Esophagus muscularis mucosa (tissue), 4 donors: ENCODE measurements at regions of chr3 and their contacts with region 1.

Region 1: DNA sequence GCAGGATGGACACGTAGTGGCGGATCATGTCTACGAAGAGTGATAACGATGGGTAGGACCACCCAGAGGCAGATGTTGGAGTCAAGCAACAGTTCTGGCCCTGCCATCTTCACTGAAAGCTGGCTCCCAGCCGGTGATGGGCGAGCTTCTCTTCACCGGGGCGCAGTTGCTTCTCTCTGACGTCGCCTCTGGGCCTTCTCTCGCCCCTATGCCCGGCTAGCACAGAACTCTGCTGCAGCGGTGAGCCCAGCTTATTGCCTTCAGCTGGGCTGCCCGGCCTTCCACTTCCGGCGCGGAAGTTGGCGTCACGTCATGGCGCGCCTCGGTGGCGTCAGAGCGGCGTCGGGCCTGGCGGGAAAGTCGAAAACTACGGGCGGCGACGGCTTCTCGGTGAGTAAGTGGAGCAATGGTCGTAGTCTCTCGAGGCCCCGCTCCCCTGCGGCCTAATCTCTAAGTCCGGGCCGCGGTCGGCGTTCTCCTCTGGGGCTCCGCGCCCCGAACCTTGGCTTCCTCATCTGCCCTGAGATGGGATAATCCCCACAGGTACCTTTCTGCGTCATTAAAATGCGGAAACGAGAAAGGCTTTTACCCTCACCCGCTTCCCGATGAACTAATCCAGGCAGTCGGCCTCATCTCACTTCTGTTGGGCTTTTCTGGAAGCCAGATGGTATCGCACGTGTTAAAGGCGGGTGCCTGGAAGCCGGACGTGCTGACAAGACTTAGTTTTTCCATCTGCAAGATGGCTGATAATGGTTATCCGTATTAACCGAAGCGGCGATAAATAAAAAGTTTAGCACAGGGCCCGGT is at the start of gene FANCD2:
- DNase-seq: peak; percentile 97
- H3K4me3 ChIP-seq: peak within 1 kb of the TSS; percentile 81 to 86 (median 83)
- H3K27ac ChIP-seq: peak within 1 kb of the TSS; percentile 65 to 89 (median 80)
- H3K4me1 ChIP-seq: peaks cover 21 to 37% (median 30%) of the 10 kb centered on the region in 4 donors
- H3K27me3 ChIP-seq: no peaks in the 10 kb centered on the region
- CTCF ChIP-seq: no peak
- EP300 ChIP-seq: no peak
- POLR2A ChIP-seq: peak; percentile 55
- total RNA-seq, gene FANCD2: 0.52 to 2.3 (median 1.1) TPM

Region 2: GRCh38 chr3:9932843-9933560 is 93.3 kb before region 1 on chr3:
- intact Hi-C with region 1: loop called (anchors 5 kb)
- DNase-seq: peak; percentile 95
- H3K4me3 ChIP-seq: peak overlapping the region; percentile 70 to 89 (median 79)
- H3K27ac ChIP-seq: peak overlapping the region; percentile 93 to 99 (median 96)
- H3K4me1 ChIP-seq: peaks cover 22 to 52% (median 38%) of the 10 kb centered on the region in 4 donors
- H3K27me3 ChIP-seq: peaks cover 0 to 8% (median 0%) of the 10 kb centered on the region in 4 donors
- CTCF ChIP-seq: peak; percentile 74 to 84 (median 80)
- EP300 ChIP-seq: no peak
- POLR2A ChIP-seq: no peak

Region 3: DNA sequence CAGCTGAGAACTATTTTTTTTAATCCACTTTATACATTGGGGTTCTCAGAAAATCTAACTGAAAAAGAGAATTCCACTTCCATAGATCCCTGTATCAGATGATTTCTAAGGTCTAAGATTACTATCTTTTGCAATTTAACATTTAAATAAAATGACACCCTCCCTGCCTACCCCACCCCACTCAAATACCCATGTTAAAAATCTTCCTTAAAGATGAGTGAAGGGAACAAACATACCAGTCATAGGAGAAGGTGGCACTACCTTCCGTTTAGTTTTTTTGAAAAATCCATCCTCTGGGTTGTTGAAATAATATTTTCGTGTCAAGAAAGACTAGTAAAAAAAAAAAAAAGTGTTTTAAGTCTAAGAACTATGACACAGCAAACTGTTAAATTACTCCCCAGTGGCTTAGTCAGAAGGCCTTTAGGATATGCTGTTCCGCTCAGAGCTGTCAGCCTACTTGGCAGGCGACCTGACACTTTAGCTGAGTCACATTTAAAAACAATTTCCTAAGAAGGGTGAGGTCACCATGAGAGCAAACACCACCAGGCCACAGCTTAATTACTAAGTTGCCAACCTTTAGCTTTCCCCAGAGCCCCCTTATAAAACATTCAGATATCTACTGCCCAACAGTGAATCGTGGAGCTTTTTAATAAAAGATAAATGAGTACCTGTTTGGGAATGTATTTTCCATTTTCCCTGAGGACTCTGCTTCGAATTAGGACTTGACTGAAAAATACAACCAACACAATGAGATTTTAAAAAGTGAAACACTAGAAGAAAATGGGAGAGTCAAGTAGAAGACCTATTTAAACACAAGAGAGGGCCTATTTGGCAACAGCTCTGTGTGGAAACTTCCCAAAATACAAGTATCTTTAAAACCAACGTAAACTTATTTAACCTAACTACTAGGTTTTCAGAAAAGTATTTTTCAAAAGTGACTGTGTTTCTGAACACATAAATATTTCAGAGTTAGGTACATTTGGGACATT is 49.3 kb before region 1 on chr3:
- intact Hi-C with region 1: loop called (anchors 5 kb)
- DNase-seq: peak; percentile 95
- H3K4me3 ChIP-seq: peak overlapping the region in 2 of 4 donors; percentile 1 to 20
- H3K27ac ChIP-seq: peak overlapping the region; percentile 83 to 85 (median 84)
- H3K4me1 ChIP-seq: peaks cover 16 to 44% (median 44%) of the 10 kb centered on the region in 4 donors
- H3K27me3 ChIP-seq: no peaks in the 10 kb centered on the region
- CTCF ChIP-seq: no peak
- EP300 ChIP-seq: no peak
- POLR2A ChIP-seq: no peak

Region 4: GRCh38 chr3:10115326-10116137 is 89.2 kb after region 1 on chr3 and contains the start of gene BRK1:
- intact Hi-C with region 1: loop called (anchors 5 kb)
- DNase-seq: peak; percentile 98
- H3K4me3 ChIP-seq: peak within 1 kb of the TSS; percentile 84 to 89 (median 88)
- H3K27ac ChIP-seq: peak within 1 kb of the TSS; percentile 83 to 89 (median 86)
- H3K4me1 ChIP-seq: peaks cover 25 to 50% (median 39%) of the 10 kb centered on the region in 4 donors
- H3K27me3 ChIP-seq: no peaks in the 10 kb centered on the region
- CTCF ChIP-seq: peak in 1 of 3 experiments; percentile 17
- EP300 ChIP-seq: no peak
- POLR2A ChIP-seq: peak; percentile 50
- total RNA-seq, gene BRK1: 107 to 148 (median 142) TPM

Region 5: DNA sequence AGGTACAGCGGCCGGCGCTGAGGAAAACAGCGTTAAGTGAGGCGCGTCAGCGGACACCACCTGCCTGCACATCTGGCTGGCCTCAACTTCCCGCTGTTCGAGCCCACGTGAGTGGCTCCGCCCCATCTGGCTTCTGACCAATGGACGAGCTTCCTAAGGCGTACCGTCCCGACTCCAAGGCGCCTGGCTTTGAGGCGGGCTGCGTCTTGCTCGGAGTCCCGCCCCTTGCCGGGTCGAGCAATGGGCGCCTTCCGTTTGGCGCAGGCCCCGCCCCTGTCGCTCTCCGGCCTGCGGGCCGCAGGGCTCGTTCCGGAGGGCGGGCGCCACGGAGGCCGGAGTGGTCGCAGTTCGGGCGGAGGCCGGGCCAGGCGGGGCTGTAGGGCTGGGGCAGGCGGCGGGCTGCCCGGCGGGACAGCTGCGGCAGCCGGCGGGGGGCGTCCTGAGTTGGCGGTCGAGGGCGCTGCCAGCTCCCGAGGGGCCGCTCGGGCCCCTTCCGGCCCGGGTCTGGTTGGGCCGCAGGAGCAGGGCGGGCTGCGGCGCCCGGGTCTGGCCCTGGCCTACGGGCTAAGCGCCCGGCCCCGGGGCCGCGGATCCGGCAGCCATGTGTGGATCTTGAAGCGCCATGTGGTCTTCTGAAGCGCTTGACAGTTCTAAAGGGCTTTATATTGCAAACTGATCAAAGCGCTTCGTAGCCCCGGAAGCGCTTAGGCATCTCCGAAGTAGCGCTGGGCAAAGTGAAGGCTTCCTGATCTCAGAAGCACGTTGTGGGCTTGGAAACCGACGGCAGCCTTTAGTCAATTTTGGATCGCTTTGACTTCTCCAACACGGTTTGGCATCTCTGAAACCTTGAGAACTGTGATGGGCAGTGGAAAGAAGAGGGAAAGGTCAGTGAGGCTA is 222.1 kb after region 1 on chr3 and contains the start of gene TATDN2:
- intact Hi-C with region 1: loop called (anchors 5 kb)
- DNase-seq: peak; percentile 98
- H3K4me3 ChIP-seq: peak within 1 kb of the TSS; percentile 79 to 100 (median 92)
- H3K27ac ChIP-seq: peak within 1 kb of the TSS; percentile 86 to 97 (median 96)
- H3K4me1 ChIP-seq: peaks cover 17 to 53% (median 43%) of the 10 kb centered on the region in 4 donors
- H3K27me3 ChIP-seq: no peaks in the 10 kb centered on the region
- CTCF ChIP-seq: peak in 1 of 3 experiments; percentile 7
- EP300 ChIP-seq: no peak
- POLR2A ChIP-seq: peak; percentile 43
- total RNA-seq, gene TATDN2: 15.0 to 24.6 (median 16.7) TPM